CD4-positive, alpha-beta memory T cell (primary cell): ENCODE measurements at regions of chr5 and their contacts with region 1.

Region 1: DNA sequence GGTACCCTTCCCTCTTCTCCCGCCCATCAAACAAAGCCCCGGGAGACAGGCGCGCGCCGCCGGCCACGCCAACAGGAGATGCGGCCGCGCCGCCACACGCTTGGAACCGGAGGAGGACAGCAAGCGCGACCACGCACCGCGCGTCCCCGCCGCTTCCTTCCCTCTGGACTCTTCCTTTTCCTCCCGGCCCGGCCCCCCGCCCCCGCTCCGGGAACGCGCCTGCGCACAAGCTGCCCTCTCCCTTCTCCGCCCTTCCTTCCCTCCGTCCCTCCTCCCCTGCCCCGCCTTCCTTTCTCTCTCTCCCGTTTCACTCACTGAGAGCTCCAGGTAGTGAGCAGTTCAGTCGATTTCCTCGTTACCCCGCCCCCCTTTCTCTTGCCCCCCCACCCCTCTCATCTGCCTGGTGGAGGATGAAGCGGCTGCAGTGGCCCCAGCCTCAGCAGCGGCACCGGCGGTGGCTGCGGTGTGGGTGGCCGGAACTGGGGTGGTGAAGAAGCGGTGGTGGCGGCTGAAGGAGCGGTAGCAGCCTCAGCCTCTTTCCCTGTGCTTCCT is at the start of gene RASA1:
- DNase-seq: peak in 3 of 5 donors; percentile 75 to 87 (median 77)
- H3K4me3 ChIP-seq: peak within 1 kb of the TSS; percentile 79 to 83
- H3K4me3 Mint-ChIP-seq: peak within 1 kb of the TSS; percentile 92 to 100 (median 94)
- H3K27ac ChIP-seq: peak within 1 kb of the TSS; percentile 69
- H3K27ac Mint-ChIP-seq: peak within 1 kb of the TSS; percentile 88 to 98 (median 95)
- H3K4me1 ChIP-seq: peaks cover 32% of the 10 kb centered on the region
- H3K4me1 Mint-ChIP-seq: peaks cover 23 to 42% (median 33%) of the 10 kb centered on the region in 4 donors
- H3K27me3 ChIP-seq: no peaks in the 10 kb centered on the region
- H3K27me3 Mint-ChIP-seq: no peaks in the 10 kb centered on the region
- total RNA-seq, gene RASA1: 31.0 to 32.4 TPM

Region 2: DNA sequence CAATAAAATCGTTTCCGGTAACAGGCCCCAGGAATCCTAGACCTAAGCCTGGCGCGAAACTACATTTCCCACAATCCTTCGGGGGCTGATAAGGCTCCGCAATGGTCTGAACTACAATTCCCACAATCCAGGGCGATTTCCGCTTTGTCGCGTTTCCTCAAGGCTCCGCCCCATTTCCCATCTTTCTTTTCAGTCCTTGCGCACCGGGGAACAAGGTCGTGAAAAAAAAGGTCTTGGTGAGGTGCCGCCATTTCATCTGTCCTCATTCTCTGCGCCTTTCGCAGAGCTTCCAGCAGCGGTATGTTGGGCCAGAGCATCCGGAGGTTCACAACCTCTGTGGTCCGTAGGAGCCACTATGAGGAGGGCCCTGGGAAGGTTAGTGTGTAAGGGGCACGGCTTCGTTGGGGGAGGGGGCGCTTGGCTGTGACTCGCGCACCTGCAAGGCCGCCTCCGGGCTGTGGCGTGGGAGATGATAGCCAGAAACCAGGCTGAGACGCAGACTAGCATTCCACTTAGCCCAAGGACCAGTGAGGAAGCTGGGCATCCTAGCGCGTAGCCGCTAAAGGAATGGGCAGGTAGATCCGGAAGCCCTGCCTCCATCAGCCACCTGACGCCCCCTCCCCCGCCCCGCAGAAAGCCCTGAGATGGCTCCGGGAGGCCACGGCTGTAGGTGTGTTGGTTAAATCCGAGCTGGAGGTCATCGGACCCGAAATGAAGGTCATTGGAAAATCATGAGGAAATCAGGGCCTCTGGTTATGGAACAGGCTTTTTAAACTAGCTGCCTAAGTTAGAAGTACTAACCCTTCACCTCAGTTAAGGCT is 649.7 kb before region 1 on chr5 and contains the start of gene COX7C:
- CTCF ChIA-PET with region 1: no interaction called
- POLR2A ChIA-PET with region 1: interaction called, 3 read pairs
- intact Hi-C with region 1: loop called (anchors 5 kb)
- DNase-seq: peak; percentile 92 to 96 (median 95)
- H3K4me3 ChIP-seq: peak within 1 kb of the TSS; percentile 82 to 98
- H3K4me3 Mint-ChIP-seq: peak within 1 kb of the TSS; percentile 95 to 100 (median 100)
- H3K27ac ChIP-seq: peak within 1 kb of the TSS; percentile 98
- H3K27ac Mint-ChIP-seq: peak within 1 kb of the TSS; percentile 97 to 100 (median 100)
- H3K4me1 ChIP-seq: peaks cover 17% of the 10 kb centered on the region
- H3K4me1 Mint-ChIP-seq: peaks cover 15 to 36% (median 27%) of the 10 kb centered on the region in 4 donors
- H3K27me3 ChIP-seq: no peaks in the 10 kb centered on the region
- H3K27me3 Mint-ChIP-seq: peaks cover 3 to 9% of the 10 kb centered on the region in 2 donors
- total RNA-seq, gene COX7C: 474 to 489 TPM

Region 3: GRCh38 chr5:87069974-87070624 is 197.6 kb before region 1 on chr5:
- CTCF ChIA-PET with region 1: no interaction called
- POLR2A ChIA-PET with region 1: interaction called, 11 read pairs
- intact Hi-C with region 1: loop called (anchors 1 kb)
- DNase-seq: peak in 1 of 5 donors; percentile 3
- H3K4me3 ChIP-seq: no peak overlapping the region
- H3K4me3 Mint-ChIP-seq: no peak overlapping the region
- H3K27ac ChIP-seq: no peak overlapping the region
- H3K27ac Mint-ChIP-seq: peak overlapping the region in 1 of 7 donors; percentile 69
- H3K4me1 ChIP-seq: peaks cover 13% of the 10 kb centered on the region
- H3K4me1 Mint-ChIP-seq: peaks cover 14 to 26% (median 22%) of the 10 kb centered on the region in 4 donors
- H3K27me3 ChIP-seq: no peaks in the 10 kb centered on the region
- H3K27me3 Mint-ChIP-seq: no peaks in the 10 kb centered on the region

Region 4: DNA sequence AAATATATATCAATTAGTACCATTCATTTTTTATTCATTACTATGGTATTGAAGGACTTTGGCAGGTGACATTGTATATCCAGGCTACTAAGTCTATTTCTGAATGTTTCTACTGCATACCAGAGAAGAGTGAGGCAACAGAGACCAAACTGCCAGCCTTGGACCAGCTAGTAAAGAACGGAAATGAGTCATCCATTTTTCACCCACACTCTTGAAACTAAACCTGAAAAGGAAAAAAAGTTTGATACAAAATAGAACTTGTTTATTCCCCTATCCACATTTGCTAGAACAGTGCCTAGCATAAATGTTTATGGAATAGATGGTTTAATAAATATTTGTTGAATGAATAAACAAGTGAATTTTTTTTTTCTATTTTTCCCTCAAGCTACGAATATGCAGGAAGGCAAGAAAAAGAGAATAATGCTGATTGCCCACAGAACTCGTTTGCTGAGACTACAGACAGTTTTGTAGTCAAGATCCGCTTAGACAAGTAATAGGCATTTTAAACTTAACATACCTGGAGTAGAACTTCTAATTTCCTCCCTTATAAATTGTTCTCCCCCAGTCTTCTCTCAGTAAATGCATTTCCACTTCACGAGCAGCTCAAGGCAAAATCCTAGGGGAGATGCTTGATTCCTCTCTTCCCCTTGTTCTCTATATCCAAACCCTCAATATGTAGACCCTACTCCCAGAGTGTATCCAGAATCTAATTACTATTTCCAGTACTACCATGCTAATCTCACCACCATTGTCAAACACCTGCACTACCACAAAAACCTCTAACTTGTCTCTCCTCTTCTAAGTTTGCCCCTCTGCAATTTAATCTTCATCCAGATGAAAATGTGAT is 146.1 kb before region 1 on chr5:
- CTCF ChIA-PET with region 1: no interaction called
- POLR2A ChIA-PET with region 1: interaction called, 16 read pairs
- intact Hi-C with region 1: loop called (anchors 5 kb)
- DNase-seq: peak; percentile 29 to 69 (median 46)
- H3K4me3 ChIP-seq: no peak overlapping the region
- H3K4me3 Mint-ChIP-seq: peak overlapping the region; percentile 40 to 88 (median 78)
- H3K27ac ChIP-seq: peak overlapping the region; percentile 34
- H3K27ac Mint-ChIP-seq: peak overlapping the region; percentile 54 to 93 (median 83)
- H3K4me1 ChIP-seq: peaks cover 37% of the 10 kb centered on the region
- H3K4me1 Mint-ChIP-seq: peaks cover 26 to 48% (median 37%) of the 10 kb centered on the region in 4 donors
- H3K27me3 ChIP-seq: no peaks in the 10 kb centered on the region
- H3K27me3 Mint-ChIP-seq: no peaks in the 10 kb centered on the region

Region 5: DNA sequence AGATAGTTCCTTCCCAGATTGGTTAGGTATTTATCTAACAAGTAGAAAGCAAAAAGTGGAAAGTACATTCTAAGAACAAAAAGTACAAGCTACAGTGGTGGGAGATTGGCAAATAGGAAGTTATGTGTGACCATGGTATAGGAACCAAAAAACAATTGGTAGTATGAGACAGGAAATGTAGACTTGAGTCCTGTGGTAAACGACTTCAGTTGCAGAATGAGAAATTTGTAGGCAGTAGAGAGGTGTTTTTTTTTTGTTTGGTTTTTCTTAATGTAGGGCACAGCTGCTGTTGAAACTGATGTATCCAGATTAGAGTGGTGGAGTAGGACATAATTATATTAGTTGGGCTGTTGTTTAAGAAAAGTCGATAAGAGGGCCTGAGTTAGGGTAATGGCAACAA is 73.1 kb after region 1 on chr5:
- CTCF ChIA-PET with region 1: no interaction called
- POLR2A ChIA-PET with region 1: interaction called, 4 read pairs
- intact Hi-C with region 1: loop called (anchors 2 kb)
- DNase-seq: peak in 4 of 5 donors; percentile 50 to 75 (median 63)
- H3K4me3 ChIP-seq: no peak overlapping the region
- H3K4me3 Mint-ChIP-seq: peak overlapping the region; percentile 59 to 84 (median 74)
- H3K27ac ChIP-seq: peak overlapping the region; percentile 56
- H3K27ac Mint-ChIP-seq: peak overlapping the region; percentile 65 to 96 (median 85)
- H3K4me1 ChIP-seq: peaks cover 29% of the 10 kb centered on the region
- H3K4me1 Mint-ChIP-seq: peaks cover 16 to 34% (median 22%) of the 10 kb centered on the region in 4 donors
- H3K27me3 ChIP-seq: no peaks in the 10 kb centered on the region
- H3K27me3 Mint-ChIP-seq: no peaks in the 10 kb centered on the region

Region 6: GRCh38 chr5:87412630-87413342 is 145.1 kb after region 1 on chr5 and contains the start of gene CCNH:
- CTCF ChIA-PET with region 1: interaction called, 3 read pairs
- POLR2A ChIA-PET with region 1: interaction called, 13 read pairs
- intact Hi-C with region 1: loop called (anchors 2 kb)
- DNase-seq: peak; percentile 94 to 98 (median 97)
- H3K4me3 ChIP-seq: peak within 1 kb of the TSS; percentile 92 to 96
- H3K4me3 Mint-ChIP-seq: peak within 1 kb of the TSS; percentile 94 to 99 (median 98)
- H3K27ac ChIP-seq: peak within 1 kb of the TSS; percentile 100
- H3K27ac Mint-ChIP-seq: peak within 1 kb of the TSS; percentile 88 to 100 (median 99)
- H3K4me1 ChIP-seq: peaks cover 46% of the 10 kb centered on the region
- H3K4me1 Mint-ChIP-seq: peaks cover 38 to 54% (median 42%) of the 10 kb centered on the region in 4 donors
- H3K27me3 ChIP-seq: no peaks in the 10 kb centered on the region
- H3K27me3 Mint-ChIP-seq: no peaks in the 10 kb centered on the region
- total RNA-seq, gene CCNH: 93.9 to 98.6 TPM